Left cardiac atrium (tissue), 4 donors: ENCODE measurements at regions of chr9 and their contacts with region 1.

Region 1: GRCh38 chr9:77977210-77977611 is 54.4 kb downstream of the GNAQ start:
- DNase-seq: peak; percentile 74
- ATAC-seq: peak; percentile 75 to 84

Region 2: GRCh38 chr9:77864211-77864889 is 112.9 kb before region 1 on chr9:
- intact Hi-C with region 1: no loop called
- DNase-seq: no peak
- ATAC-seq: peak; percentile 30 to 58

Region 3: GRCh38 chr9:78035383-78035993 is 58.3 kb after region 1 on chr9:
- intact Hi-C with region 1: loop called (anchors 2 to 5 kb)
- DNase-seq: peak; percentile 46
- ATAC-seq: peak in 1 of 2 donors; percentile 11